ENCODE measurements at regions of chr12 and their contacts with region 1.

Region 1: GRCh38 chr12:94101738-94102660 is 46.4 kb upstream of the PLXNC1 start:
- DNase-seq: peak; percentile 79
- H3K4me3 ChIP-seq: peak overlapping the region; percentile 33 to 58 (median 52)
- H3K27ac ChIP-seq: no peak overlapping the region
- H3K4me1 ChIP-seq: peaks cover 22% of the 10 kb centered on the region
- H3K27me3 ChIP-seq: peaks cover 6 to 13% of the 10 kb centered on the region in 2 experiments
- CTCF ChIP-seq: peak; percentile 80 to 86
- POLR2A ChIP-seq: no peak

Region 2: GRCh38 chr12:92987362-92987761 is 1114.6 kb before region 1 on chr12:
- CTCF ChIA-PET with region 1: interaction called, 37 read pairs
- POLR2A ChIA-PET with region 1: no interaction called
- dilution Hi-C with region 1: no loop called
- intact Hi-C with region 1: loop called (anchors 2 kb)
- DNase-seq: peak; percentile 82
- H3K4me3 ChIP-seq: no peak overlapping the region
- H3K27ac ChIP-seq: no peak overlapping the region
- H3K4me1 ChIP-seq: peaks cover 4% of the 10 kb centered on the region
- H3K27me3 ChIP-seq: no peaks in the 10 kb centered on the region
- CTCF ChIP-seq: peak; percentile 28 to 30
- POLR2A ChIP-seq: no peak

Region 3: DNA sequence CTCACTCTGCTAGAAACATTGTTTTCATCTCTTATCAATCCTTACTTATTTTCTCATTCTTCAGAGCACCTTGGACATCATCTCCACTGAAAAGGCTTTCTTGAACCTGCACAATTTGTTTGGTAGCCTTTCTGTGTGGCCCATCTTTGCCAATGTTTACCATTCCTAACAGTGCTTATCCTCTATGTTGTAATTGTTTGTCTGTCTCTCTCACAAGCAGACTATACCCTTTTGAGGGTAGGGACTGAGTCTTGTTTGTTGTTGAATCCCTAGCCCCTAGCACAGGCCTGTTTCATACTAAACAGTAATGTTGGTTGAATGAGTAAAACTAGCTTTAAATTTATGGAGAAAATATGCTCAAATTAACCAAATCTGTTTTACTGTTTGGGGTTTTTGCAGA is 625.4 kb before region 1 on chr12:
- CTCF ChIA-PET with region 1: interaction called, 12 read pairs
- POLR2A ChIA-PET with region 1: no interaction called
- dilution Hi-C with region 1: no loop called
- intact Hi-C with region 1: no loop called
- DNase-seq: no peak
- H3K4me3 ChIP-seq: no peak overlapping the region
- H3K27ac ChIP-seq: no peak overlapping the region
- H3K4me1 ChIP-seq: no peaks in the 10 kb centered on the region
- H3K27me3 ChIP-seq: no peaks in the 10 kb centered on the region
- CTCF ChIP-seq: no peak
- POLR2A ChIP-seq: no peak

Region 4: GRCh38 chr12:93550748-93551611 is 551.0 kb before region 1 on chr12:
- CTCF ChIA-PET with region 1: interaction called, 11 read pairs
- POLR2A ChIA-PET with region 1: no interaction called
- dilution Hi-C with region 1: no loop called
- intact Hi-C with region 1: no loop called
- DNase-seq: no peak
- H3K4me3 ChIP-seq: no peak overlapping the region
- H3K27ac ChIP-seq: no peak overlapping the region
- H3K4me1 ChIP-seq: no peaks in the 10 kb centered on the region
- H3K27me3 ChIP-seq: no peaks in the 10 kb centered on the region
- CTCF ChIP-seq: no peak
- POLR2A ChIP-seq: no peak

Region 5: DNA sequence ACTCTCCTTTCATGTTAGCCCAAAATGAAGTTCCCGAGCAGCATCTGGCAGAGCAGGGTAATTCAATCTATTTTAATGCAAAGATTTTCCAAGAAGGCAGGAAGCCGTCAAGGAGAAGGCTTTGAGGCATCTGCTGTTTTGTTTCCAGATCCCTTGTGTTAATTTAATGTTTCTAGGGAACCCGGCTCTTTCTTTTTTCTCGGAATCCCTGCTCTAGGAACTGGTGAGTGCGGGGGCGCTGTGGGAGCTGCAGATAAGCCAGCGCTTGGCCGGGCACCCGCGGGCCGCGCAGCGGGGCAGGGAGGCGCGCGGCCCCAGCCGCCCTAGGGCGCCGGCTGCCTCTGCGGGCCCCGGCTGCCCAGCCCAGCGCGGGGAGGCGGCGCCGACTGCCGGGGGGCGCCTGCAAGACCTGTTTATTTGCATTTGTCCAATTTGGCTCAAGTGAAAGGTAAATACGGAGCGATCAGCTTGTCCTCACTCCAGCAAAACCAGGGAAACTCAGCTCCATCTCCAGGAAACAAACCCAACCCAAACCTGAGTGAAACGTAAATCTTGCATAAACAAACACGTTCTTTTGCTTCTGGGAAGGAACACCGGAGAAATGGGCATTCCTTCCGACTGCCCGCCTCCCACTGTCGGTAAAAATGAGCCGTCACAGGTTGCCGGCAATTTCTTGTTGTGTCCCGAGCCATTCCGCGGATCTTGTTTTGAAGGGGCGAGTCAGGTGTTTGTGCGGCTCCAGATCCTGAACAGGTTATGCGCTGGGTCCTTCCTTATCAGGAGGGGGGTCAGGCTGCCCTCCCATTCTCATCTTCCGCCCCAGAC is 359.7 kb before region 1 on chr12:
- CTCF ChIA-PET with region 1: interaction called, 28 read pairs
- POLR2A ChIA-PET with region 1: no interaction called
- dilution Hi-C with region 1: no loop called
- intact Hi-C with region 1: loop called (anchors 1 kb)
- DNase-seq: peak; percentile 80
- H3K4me3 ChIP-seq: peak overlapping the region; percentile 34 to 82 (median 69)
- H3K27ac ChIP-seq: no peak overlapping the region
- H3K4me1 ChIP-seq: peaks cover 8% of the 10 kb centered on the region
- H3K27me3 ChIP-seq: no peaks in the 10 kb centered on the region
- CTCF ChIP-seq: peak; percentile 24 to 38
- POLR2A ChIP-seq: no peak

Region 6: DNA sequence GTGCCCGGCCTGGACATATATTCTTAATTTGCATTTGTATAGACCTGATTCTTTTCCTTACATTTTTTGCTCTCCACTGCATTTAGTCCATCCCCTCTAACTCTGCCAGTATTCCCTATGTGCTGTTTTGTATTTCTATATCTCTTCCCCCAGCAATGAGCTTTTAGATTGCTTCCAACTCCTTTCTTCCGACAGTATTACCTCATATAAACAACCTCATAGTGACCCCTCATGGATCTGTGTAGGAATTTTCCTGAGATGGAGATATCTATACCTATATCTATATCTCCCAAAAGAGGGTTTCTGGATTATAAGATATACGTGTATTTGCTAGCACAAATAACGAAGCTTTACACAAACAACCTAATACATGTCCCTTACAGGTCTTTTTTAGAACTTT is 262.9 kb before region 1 on chr12:
- CTCF ChIA-PET with region 1: interaction called, 11 read pairs
- POLR2A ChIA-PET with region 1: no interaction called
- dilution Hi-C with region 1: no loop called
- intact Hi-C with region 1: no loop called
- DNase-seq: no peak
- H3K4me3 ChIP-seq: no peak overlapping the region
- H3K27ac ChIP-seq: no peak overlapping the region
- H3K4me1 ChIP-seq: no peaks in the 10 kb centered on the region
- H3K27me3 ChIP-seq: no peaks in the 10 kb centered on the region
- CTCF ChIP-seq: no peak
- POLR2A ChIP-seq: no peak

Region 7: GRCh38 chr12:94112132-94112531 is 10.1 kb after region 1 on chr12:
- CTCF ChIA-PET with region 1: interaction called, 33 read pairs
- POLR2A ChIA-PET with region 1: no interaction called
- dilution Hi-C with region 1: no loop called
- intact Hi-C with region 1: no loop called
- DNase-seq: no peak
- H3K4me3 ChIP-seq: no peak overlapping the region
- H3K27ac ChIP-seq: no peak overlapping the region
- H3K4me1 ChIP-seq: no peaks in the 10 kb centered on the region
- H3K27me3 ChIP-seq: peaks cover 13 to 23% of the 10 kb centered on the region in 2 experiments
- CTCF ChIP-seq: no peak
- POLR2A ChIP-seq: no peak